ENCODE measurements at regions of chr2 and their contacts with region 1.

Region 1: GRCh38 chr2:118061135-118061955 is 26.9 kb upstream of the INSIG2 start:
- DNase-seq: no peak

Region 2: DNA sequence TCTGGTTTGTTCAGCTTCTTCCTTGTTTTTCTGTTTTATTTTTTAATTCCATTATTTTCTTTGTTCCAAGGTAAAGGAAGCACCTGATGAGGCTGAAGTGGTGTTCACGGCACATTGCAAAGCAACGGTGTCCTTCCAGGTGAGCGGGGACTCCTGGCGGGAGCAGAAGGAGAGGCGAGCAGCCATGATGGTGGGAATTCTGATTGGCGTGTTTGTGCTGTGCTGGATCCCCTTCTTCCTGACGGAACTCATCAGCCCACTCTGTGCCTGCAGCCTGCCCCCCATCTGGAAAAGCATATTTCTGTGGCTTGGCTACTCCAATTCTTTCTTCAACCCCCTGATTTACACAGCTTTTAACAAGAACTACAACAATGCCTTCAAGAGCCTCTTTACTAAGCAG is 158.4 kb before region 1 on chr2:
- CTCF ChIA-PET with region 1: no interaction called
- POLR2A ChIA-PET with region 1: no interaction called
- DNase-seq: no peak

Region 3: DNA sequence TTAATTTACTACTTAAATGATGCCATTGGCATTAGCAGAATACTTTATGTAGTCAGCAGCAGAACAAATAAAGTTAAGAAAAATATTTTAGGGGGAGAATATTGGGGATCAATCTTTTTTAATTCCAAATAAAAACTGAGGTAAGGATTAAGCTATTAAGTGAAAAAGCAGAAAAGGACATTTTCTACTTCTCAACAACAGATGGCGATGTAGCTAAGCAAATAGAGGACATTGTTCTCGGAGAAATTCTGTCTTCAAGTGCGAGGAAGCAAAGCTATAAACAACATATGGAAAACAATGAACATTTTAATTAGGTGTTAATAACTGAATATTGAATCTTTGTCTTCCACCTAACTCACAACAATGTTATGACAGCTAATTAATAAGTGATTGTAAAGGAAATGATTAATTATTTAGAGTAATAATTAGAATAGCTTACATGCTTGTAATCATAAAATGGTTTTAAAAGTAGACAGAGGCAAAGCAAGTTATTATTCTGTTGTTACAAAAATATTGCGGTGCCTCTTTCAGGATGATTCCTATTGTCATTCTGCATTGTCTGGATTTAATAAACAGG is 14.6 kb before region 1 on chr2:
- CTCF ChIA-PET with region 1: interaction called, 11 read pairs
- POLR2A ChIA-PET with region 1: interaction called, 7 read pairs
- DNase-seq: peak; percentile 36

Measured in HEK293T (cell line).